ENCODE measurements at regions of chr16 and their contacts with region 1.

Region 1: GRCh38 chr16:19086322-19087199 is 19.1 kb downstream of the COQ7 start:
- DNase-seq: peak; percentile 84
- H3K4me3 ChIP-seq: peak overlapping the region; percentile 61
- H3K27ac ChIP-seq: no peak overlapping the region
- H3K27me3 ChIP-seq: no peaks in the 10 kb centered on the region
- CTCF ChIP-seq: peak; percentile 97

Region 2: GRCh38 chr16:19067349-19068236 is 19.0 kb before region 1 on chr16 and contains the start of gene COQ7:
- CTCF ChIA-PET with region 1: interaction called, 17 read pairs
- POLR2A ChIA-PET with region 1: interaction called, 6 read pairs
- DNase-seq: peak; percentile 100
- H3K4me3 ChIP-seq: peak within 1 kb of the TSS; percentile 91
- H3K27ac ChIP-seq: peak within 1 kb of the TSS; percentile 95
- H3K27me3 ChIP-seq: no peaks in the 10 kb centered on the region
- CTCF ChIP-seq: no peak
- polyA plus RNA-seq, gene COQ7: 14.1 and 14.2 TPM in 2 replicates

Region 3: DNA sequence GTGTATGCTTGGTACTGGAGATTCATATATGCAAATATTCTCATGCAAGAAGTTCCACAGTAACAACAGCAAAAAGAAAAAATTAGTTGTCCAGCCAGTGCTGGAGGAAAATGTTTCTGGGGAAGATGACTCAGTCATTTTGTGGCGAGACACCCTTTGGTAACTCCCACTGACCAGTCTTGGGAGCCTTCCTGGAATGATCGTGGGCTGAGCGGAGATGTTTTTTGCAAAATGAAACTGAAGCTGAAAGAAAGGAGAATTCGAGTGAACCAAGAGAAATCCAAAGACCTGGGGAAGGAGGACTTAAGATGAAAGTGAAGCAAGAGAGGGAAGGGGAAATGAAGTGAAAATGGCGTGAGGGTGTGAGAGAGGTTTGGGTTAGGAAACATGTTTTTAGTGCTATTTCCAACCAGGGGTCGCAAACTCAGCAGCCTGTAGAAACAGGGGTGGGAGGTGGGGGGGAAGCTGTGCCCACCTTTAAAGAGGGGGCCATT is 32.4 kb after region 1 on chr16:
- CTCF ChIA-PET with region 1: interaction called, 32 read pairs
- POLR2A ChIA-PET with region 1: interaction called, 3 read pairs
- DNase-seq: peak; percentile 78
- H3K4me3 ChIP-seq: peak overlapping the region; percentile 65
- H3K27ac ChIP-seq: peak overlapping the region; percentile 95
- H3K27me3 ChIP-seq: no peaks in the 10 kb centered on the region
- CTCF ChIP-seq: no peak

Region 4: DNA sequence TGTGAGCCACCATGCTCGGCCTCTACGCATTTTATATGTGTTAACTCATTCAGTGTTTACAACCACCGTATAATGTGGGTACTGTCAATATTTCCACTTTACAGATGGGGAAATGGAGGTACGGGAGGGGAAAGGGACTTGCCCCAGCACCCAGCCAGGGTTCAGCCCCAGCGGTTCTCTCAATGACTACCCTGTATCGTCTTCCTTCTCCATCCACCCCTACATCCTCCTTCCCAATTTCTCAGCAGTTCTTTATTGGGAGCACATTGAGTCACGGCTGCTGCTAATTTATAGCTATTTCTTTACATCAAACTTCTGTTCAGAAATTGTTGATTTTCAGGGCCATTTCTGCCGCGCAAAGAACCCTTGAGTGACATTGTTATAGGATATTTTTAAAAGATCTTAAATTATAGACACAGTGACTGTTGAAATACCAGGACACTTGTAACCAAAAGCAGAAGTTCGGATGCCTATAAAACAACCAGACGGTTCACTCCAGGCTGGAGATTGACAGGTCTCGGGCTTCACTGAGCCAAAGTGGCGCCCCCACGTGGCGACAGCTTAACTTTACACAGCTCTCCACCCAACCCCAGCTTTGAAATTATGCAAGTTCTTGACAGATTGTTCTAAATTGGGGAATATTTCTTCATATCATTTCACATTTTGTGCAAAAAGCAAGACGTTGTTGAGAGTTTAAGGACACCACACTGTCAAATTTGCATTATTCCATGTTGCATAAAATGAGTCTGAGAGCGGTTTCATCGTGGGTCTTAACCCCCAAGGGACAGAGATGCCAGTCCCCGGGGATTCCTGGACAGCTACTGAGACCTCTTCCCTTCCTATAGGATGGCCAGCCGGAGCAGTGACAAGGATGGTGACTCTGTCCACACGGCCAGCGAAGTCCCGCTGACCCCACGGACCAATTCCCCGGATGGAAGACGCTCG is 93.3 kb after region 1 on chr16:
- CTCF ChIA-PET with region 1: interaction called, 37 read pairs
- POLR2A ChIA-PET with region 1: interaction called, 11 read pairs
- DNase-seq: no peak
- H3K4me3 ChIP-seq: no peak overlapping the region
- H3K27ac ChIP-seq: no peak overlapping the region
- H3K27me3 ChIP-seq: peaks cover 9% of the 10 kb centered on the region
- CTCF ChIP-seq: peak; percentile 55

Region 5: DNA sequence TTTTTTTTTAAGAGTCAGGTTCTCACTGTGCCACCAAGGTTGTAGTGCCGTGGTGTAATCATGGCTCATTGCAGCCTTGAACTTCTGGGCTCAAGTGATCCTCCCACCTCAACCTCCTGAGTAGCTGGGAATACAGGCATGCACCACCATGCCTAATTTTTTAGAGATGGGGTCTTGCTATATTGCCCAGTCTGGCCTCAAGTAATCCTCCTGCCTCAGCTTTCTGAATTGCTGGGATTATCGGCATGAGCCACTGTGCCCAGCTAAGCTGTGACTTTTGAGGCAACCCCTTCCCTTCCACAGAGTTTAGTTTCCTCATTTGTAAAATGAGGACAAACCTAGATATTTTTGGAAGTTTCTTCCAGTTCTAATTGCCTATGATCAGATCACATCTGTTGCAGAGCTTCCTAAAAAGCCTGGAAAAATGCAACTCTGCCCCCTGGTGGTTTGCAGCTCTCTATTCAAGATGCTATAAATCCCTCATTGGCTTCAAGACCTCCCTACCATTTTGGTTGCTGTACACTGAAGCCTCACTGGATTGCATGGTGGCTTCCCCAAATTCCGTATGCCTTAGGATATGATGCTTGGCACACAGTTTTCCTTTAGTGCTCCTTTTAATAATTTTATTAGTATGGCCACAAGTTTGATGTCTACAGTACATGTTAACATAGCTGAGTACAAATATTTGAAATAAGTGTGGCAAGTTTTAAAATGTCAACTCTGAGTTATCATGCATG is 416.0 kb after region 1 on chr16:
- CTCF ChIA-PET with region 1: interaction called, 53 read pairs
- POLR2A ChIA-PET with region 1: no interaction called
- DNase-seq: no peak
- H3K4me3 ChIP-seq: no peak overlapping the region
- H3K27ac ChIP-seq: no peak overlapping the region
- H3K27me3 ChIP-seq: no peaks in the 10 kb centered on the region
- CTCF ChIP-seq: peak; percentile 86

Region 6: GRCh38 chr16:19680881-19681340 is 594.4 kb after region 1 on chr16:
- CTCF ChIA-PET with region 1: no interaction called
- POLR2A ChIA-PET with region 1: no interaction called
- DNase-seq: no peak
- H3K4me3 ChIP-seq: no peak overlapping the region
- H3K27ac ChIP-seq: no peak overlapping the region
- H3K27me3 ChIP-seq: no peaks in the 10 kb centered on the region
- CTCF ChIP-seq: peak; percentile 18; the same call in 1 of the 2 replicates